ENCODE measurements at regions of chr12 and their contacts with region 1.

Region 1: DNA sequence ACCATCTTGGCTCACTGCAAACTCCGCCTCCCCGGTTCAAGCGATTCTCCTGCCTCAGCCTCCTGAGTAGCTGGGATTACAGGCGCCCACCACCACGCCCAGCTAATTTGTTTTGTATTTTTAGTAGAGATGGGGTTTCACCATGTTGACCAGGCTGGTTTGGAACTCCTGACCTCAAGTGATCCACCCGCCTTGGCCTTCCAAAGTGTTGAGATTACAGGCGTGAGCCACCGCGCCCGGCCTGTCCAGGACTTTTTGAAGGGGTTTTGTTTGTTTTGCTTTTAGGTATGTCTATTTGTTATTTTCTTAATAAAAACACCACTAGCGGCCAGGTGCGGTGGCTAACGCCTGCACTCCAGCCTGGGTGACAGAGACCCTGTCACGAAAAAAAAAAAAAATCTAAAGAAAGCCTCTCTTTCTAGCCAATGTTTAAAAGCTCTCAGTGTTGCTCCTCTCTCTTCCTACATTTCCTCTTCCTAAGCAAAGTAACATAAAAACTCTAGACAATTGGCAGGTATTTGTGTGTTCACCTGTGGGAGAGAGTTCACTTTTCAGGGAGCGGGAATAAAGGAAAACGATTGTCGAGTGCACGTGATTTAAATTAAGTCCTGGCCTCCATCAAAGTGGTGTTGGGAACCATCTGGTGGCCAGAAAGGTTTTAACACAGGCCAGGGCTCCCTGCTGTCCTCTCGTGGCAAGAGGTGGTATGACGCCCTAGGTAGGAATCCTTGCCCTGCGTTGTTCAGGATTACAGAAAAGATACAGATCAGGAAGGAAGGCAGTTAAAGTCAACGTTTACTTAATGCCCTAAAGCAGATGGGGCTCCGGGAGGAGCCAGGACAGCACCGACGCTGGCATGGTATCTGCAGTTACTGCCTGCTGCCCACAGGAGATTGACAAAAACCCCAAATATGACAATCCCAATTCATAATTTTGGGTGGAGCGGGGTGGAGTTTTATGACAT is 36.2 kb upstream of the ATP23 start:
- DNase-seq: peak; percentile 46
- ATAC-seq: peak; percentile 97
- H3K4me3 ChIP-seq: no peak overlapping the region
- H3K27ac ChIP-seq: no peak overlapping the region
- H3K4me1 ChIP-seq: peaks cover 4% of the 10 kb centered on the region
- H3K27me3 ChIP-seq: peaks cover 0 to 2% of the 10 kb centered on the region in 2 experiments; a peak in 2 of 4 replicates
- CTCF ChIP-seq: peak; percentile 100; a peak in 5 of 6 replicates
- EP300 ChIP-seq: no peak
- POLR2A ChIP-seq: no peak
- RAD21 ChIP-seq: peak; percentile 99

Region 2: DNA sequence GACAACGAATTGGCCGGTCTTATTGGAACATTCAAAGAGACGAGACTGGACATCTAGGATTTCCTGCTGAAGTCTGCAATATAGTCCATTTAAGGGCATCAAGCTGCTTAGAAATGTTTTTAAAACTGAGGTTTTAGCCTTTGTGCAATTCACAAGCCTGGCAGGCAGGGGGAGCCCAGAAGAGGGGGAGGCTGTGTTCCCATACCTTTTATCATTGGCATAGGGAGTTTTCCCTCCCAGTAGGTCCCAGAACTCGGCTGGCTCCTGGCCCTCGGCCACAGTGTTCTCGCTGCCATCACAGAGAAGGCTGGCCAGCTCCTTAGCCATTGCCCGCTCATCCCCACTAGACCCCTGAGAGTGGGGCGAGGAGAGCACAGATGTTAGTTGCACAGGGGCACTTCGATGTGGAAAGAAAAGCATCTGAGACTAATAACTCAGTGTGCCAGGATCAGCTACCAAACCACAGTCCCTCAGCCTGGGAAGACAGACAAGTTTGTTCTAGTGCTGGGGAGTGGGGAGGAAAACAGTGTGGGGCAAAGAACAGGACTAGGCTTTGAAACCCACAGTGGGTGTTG is 101.7 kb before region 1 on chr12:
- CTCF ChIA-PET with region 1: interaction called, 87 read pairs
- POLR2A ChIA-PET with region 1: no interaction called
- RAD21 ChIA-PET with region 1: interaction called, 14 read pairs
- SMC1A ChIA-PET with region 1: interaction called, 22 read pairs
- in situ Hi-C with region 1: no loop called
- intact Hi-C with region 1: loop called (anchors 1 kb)
- DNase-seq: no peak
- ATAC-seq: peak; percentile 74
- H3K4me3 ChIP-seq: no peak overlapping the region
- H3K27ac ChIP-seq: no peak overlapping the region
- H3K4me1 ChIP-seq: no peaks in the 10 kb centered on the region
- H3K27me3 ChIP-seq: no peaks in the 10 kb centered on the region
- CTCF ChIP-seq: peak; percentile 65 to 82 (median 74)
- EP300 ChIP-seq: no peak
- POLR2A ChIP-seq: no peak
- RAD21 ChIP-seq: peak; percentile 61

Region 3: GRCh38 chr12:57829025-57829777 is 75.9 kb before region 1 on chr12:
- CTCF ChIA-PET with region 1: interaction called, 226 read pairs
- POLR2A ChIA-PET with region 1: interaction called, 112 read pairs
- RAD21 ChIA-PET with region 1: interaction called, 273 read pairs
- SMC1A ChIA-PET with region 1: interaction called, 416 read pairs
- in situ Hi-C with region 1: loop called (anchors 5 kb)
- intact Hi-C with region 1: loop called (anchors 1 kb)
- DNase-seq: no peak
- ATAC-seq: no peak
- H3K4me3 ChIP-seq: no peak overlapping the region
- H3K27ac ChIP-seq: no peak overlapping the region
- H3K4me1 ChIP-seq: peaks cover 30% of the 10 kb centered on the region
- H3K27me3 ChIP-seq: no peaks in the 10 kb centered on the region
- CTCF ChIP-seq: no peak
- EP300 ChIP-seq: no peak
- POLR2A ChIP-seq: no peak
- RAD21 ChIP-seq: no peak

Region 4: DNA sequence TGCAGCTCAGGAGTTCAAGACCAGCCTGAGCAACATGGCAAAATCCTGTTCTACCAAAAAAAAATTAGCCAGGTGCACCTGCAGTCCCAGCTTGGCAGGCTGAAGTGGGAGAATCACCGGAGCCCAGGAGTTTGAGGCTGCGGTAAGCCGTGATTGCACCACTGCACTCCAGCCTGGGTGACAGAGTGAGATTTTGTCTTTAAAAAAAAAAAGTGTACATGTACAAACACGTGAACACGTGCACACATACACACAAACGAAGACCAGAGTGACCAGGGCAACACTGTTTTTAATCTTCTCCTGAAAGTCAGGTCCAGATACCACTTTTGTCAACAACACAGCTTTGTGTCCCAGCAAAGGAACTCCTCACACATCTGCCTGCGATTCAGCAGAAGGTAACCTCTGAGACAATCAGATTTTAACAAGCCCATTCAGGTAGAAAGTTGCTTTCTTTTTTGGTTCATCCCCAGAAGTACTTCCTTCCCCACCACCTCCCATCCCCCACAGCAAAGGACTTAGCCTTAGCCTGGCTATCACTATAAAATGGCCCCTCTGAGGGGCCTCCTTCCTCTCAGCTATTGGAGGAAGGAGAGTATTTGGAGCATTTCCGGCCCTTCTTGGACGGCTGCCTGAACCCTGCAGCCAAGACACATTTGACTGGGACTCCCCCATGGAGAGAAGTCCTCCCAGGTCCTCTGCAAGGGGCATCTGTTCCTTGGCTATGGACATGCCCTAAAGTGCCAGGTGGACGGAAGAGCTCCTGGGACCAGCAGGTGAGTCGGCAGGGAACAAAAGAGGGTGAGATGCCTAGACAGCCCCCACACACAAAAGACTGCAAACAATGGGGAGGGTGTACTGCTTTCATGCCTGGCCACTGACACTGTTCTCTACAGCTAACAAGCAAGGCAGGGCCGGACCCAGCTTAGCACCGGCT is 68.4 kb before region 1 on chr12:
- CTCF ChIA-PET with region 1: interaction called, 226 read pairs
- POLR2A ChIA-PET with region 1: interaction called, 112 read pairs
- RAD21 ChIA-PET with region 1: interaction called, 273 read pairs
- SMC1A ChIA-PET with region 1: interaction called, 416 read pairs
- in situ Hi-C with region 1: no loop called
- intact Hi-C with region 1: loop called (anchors 1 kb)
- DNase-seq: no peak
- ATAC-seq: peak; percentile 63
- H3K4me3 ChIP-seq: peak overlapping the region; percentile 46
- H3K27ac ChIP-seq: peak overlapping the region; percentile 75
- H3K4me1 ChIP-seq: peaks cover 91% of the 10 kb centered on the region
- H3K27me3 ChIP-seq: no peaks in the 10 kb centered on the region
- CTCF ChIP-seq: no peak
- EP300 ChIP-seq: no peak
- POLR2A ChIP-seq: peak; percentile 45; the same call in 1 of the 2 replicates
- RAD21 ChIP-seq: 0 out of 2 replicates have a peak, but pooled peaks have one; percentile 11

Measured in GM12878 (cell line).